ENCODE measurements at regions of chr9 and their contacts with region 1.

Region 1: DNA sequence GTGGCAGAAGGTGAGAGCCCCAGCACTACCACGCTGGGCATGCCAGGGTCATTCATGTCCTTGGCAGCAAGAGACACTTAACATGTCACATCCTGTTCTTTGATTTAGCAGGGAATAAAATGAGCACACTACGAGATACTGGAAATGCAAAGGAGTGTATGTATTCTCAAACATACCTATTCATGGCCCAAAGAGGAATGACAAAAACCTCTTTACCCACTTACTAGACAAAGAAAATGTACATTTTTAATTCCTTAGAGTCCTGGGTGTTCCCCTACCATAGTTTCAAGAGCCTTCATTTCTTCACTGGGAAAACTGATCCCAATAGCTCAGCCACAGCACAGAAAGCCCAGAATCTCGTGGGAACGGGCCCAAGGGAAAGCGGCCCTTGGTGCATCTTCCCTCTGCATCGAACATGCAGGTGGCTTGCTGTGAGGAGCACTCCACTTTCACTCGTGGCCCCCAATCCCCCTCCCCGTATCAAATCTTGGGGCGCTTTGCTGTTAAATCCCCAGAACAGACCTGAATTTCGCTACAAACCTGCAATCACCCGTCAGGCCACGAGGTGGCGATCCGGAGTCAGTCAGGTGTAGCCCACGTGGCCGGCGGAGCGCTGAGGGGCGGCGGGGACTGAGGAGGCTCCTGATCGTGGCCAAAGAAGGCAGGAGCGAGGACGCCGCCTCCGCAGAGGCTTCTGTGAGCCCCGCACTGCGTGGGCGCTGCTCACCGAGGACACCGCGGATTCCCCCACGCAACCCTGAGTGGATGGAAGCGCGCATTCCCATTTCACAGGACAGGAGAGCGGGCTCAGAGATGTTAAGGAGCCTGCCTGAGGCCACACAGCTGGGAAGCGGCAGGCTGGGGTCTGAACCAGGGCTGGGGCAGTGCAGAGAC is 91.4 kb downstream of the LMX1B start:
- DNase-seq: peak; percentile 79
- ATAC-seq: peak; percentile 84
- H3K4me3 Mint-ChIP-seq: peak overlapping the region; percentile 45
- H3K27ac Mint-ChIP-seq: no peak overlapping the region
- H3K4me1 Mint-ChIP-seq: peaks cover 5% of the 10 kb centered on the region
- H3K27me3 Mint-ChIP-seq: peaks cover 32% of the 10 kb centered on the region
- CTCF ChIP-seq: peak; percentile 22

Region 2: GRCh38 chr9:126436545-126437267 is 268.4 kb before region 1 on chr9:
- CTCF ChIA-PET with region 1: no interaction called
- POLR2A ChIA-PET with region 1: no interaction called
- intact Hi-C with region 1: no loop called
- DNase-seq: no peak
- ATAC-seq: no peak
- H3K4me3 Mint-ChIP-seq: no peak overlapping the region
- H3K27ac Mint-ChIP-seq: no peak overlapping the region
- H3K4me1 Mint-ChIP-seq: peaks cover under 1% of the 10 kb centered on the region
- H3K27me3 Mint-ChIP-seq: no peaks in the 10 kb centered on the region
- CTCF ChIP-seq: no peak

Region 3: GRCh38 chr9:126690431-126691350 is 14.4 kb before region 1 on chr9:
- CTCF ChIA-PET with region 1: interaction called, 12 read pairs
- POLR2A ChIA-PET with region 1: no interaction called
- intact Hi-C with region 1: no loop called
- DNase-seq: peak; percentile 48
- ATAC-seq: peak; percentile 69
- H3K4me3 Mint-ChIP-seq: no peak overlapping the region
- H3K27ac Mint-ChIP-seq: no peak overlapping the region
- H3K4me1 Mint-ChIP-seq: no peaks in the 10 kb centered on the region
- H3K27me3 Mint-ChIP-seq: peaks cover 43% of the 10 kb centered on the region
- CTCF ChIP-seq: no peak

Region 4: GRCh38 chr9:126722252-126723078 is 17.3 kb after region 1 on chr9:
- CTCF ChIA-PET with region 1: interaction called, 28 read pairs
- POLR2A ChIA-PET with region 1: interaction called, 37 read pairs
- intact Hi-C with region 1: loop called (anchors 1 kb)
- DNase-seq: peak; percentile 92
- ATAC-seq: peak; percentile 75
- H3K4me3 Mint-ChIP-seq: peak overlapping the region; percentile 90
- H3K27ac Mint-ChIP-seq: peak overlapping the region; percentile 96
- H3K4me1 Mint-ChIP-seq: peaks cover 47% of the 10 kb centered on the region
- H3K27me3 Mint-ChIP-seq: no peaks in the 10 kb centered on the region
- CTCF ChIP-seq: no peak

Region 5: DNA sequence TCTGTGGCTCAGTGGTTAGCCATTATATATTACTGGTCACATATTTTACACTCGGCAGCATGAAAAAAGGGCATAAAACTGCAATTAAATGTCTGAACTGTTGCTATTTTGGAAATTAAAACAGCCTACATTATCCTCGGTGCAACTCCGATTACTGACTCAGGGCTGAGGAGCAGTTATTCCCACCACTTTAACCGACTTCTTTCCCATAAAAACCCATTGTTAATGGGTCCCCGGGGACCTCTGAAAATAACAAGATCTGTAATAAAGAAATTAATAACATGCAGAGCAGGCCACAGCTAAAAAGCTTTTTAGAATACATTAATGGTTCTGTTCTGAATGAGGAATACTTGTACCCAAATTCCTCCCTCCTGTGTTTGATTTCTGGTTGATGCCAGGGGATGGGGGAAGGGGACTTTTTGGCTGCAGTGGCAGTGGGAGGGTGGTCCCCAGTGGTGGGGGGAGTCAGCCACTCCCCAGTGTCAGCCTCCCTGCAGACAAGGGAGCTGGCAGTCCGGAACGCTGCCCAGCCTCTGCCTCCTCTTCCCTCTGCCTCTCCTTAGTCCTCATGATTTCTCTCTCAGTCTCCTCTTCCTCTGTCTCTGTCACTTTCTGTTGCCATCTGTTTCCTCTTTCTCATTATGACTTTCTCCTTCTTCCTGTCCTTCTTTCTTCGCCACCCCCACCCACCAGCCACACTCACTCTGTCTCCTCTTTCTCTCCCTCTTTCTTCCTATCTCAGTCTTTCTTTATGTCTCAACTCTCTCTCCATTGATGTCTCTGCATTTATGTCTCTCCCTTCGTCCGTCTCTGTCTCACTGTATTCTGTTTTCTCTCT is 40.7 kb after region 1 on chr9:
- CTCF ChIA-PET with region 1: interaction called, 16 read pairs
- POLR2A ChIA-PET with region 1: interaction called, 4 read pairs
- intact Hi-C with region 1: loop called (anchors 5 kb)
- DNase-seq: no peak
- ATAC-seq: peak; percentile 52
- H3K4me3 Mint-ChIP-seq: peak overlapping the region; percentile 25
- H3K27ac Mint-ChIP-seq: peak overlapping the region; percentile 73
- H3K4me1 Mint-ChIP-seq: peaks cover 37% of the 10 kb centered on the region
- H3K27me3 Mint-ChIP-seq: peaks cover under 1% of the 10 kb centered on the region
- CTCF ChIP-seq: no peak

Region 6: DNA sequence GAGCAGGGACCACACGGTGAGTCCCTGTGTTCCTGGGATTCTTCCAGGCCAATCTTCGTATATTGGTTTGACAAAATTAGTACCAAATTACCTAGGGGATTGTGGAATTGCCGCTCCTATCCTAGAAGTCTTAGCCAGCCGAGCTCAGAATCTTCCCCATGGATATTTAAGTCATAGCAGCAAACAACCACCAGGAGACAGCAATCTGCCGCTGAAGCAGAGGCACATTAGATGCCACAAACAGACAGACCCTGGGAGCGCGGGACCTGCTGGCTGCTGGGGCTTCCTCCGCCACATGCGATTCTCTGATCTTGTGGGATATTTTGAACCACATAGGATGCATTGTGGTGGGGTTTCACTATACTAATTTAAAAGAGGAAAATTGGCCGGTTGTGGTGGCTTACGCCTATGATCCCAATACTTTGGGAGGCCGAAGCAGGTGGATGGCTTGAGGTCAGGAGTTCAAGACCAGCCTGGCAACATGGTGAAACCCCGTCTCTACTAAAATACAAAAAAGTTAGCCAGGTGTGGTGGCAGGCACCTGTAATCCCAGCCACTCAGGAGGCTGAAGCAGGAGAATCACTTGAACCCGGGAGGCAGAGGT is 68.0 kb after region 1 on chr9:
- CTCF ChIA-PET with region 1: interaction called, 472 read pairs
- POLR2A ChIA-PET with region 1: no interaction called
- intact Hi-C with region 1: no loop called
- DNase-seq: no peak
- ATAC-seq: no peak
- H3K4me3 Mint-ChIP-seq: no peak overlapping the region
- H3K27ac Mint-ChIP-seq: no peak overlapping the region
- H3K4me1 Mint-ChIP-seq: no peaks in the 10 kb centered on the region
- H3K27me3 Mint-ChIP-seq: peaks cover 10% of the 10 kb centered on the region
- CTCF ChIP-seq: no peak

Region 7: DNA sequence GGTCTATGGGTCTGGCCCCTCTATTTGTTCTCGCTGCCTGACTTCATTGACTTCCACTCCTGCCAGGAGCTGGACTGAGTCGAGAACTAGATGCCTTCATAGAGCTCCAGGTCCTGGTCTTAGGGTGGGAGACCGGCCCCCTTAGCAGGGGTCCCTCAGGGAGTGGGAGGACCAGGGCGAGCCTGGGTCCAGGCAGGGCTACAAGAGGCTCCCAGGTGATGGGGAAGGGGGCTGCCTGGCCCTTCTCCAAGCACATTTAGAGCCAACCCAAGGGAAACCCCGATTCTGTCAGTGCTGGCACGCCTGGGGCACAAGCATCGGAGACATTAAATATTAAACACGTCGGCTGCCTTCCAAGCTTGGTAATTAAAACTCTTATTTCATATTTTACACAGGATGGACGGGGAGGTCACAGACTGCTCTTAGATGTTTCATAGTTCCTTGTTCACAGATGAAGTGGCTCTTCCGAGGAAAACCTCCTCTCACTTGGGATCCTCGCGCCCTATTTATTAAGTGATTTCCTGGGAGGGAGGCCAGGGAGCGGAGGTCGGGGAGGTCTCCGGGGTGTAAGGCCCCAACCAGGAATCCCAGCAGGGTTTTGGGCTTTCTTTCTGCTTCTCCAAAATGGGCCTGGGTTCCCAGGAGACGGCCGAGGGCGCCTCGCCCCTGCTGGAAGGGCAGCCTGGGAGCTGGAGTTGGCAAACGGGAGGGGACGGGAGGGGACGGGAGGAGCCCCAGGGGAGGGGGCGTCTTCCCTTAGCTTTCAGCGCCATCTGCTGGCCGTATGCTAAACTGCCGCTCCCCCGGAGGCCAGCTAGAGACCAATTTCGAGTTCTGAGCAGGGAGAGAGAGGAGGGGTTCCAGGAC is 76.3 kb after region 1 on chr9:
- CTCF ChIA-PET with region 1: interaction called, 472 read pairs
- POLR2A ChIA-PET with region 1: interaction called, 19 read pairs
- intact Hi-C with region 1: loop called (anchors 1 kb)
- DNase-seq: peak; percentile 83
- ATAC-seq: peak; percentile 89
- H3K4me3 Mint-ChIP-seq: no peak overlapping the region
- H3K27ac Mint-ChIP-seq: no peak overlapping the region
- H3K4me1 Mint-ChIP-seq: no peaks in the 10 kb centered on the region
- H3K27me3 Mint-ChIP-seq: peaks cover 27% of the 10 kb centered on the region
- CTCF ChIP-seq: peak; percentile 88

Region 8: DNA sequence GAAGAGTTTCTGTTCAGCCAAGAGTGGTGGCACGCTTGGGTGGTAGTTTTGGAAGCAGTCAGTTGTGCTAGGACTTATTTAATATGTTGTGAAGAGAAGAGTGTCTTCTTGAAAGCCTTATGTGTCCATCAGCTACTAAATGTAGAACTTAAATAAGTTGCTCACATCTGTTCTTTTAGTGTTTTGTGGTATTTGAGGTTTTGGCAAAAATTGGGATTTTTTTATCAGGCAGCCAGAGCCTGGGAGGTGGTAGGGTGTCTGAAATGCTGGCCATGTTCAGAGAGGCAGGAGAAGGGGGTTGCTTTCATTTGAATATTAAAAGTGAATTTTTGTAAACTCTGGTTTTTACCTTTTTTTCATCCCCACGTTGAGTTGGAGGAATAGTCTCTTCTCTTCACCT is 131.1 kb after region 1 on chr9:
- CTCF ChIA-PET with region 1: no interaction called
- POLR2A ChIA-PET with region 1: no interaction called
- intact Hi-C with region 1: no loop called
- DNase-seq: no peak
- ATAC-seq: no peak
- H3K4me3 Mint-ChIP-seq: no peak overlapping the region
- H3K27ac Mint-ChIP-seq: no peak overlapping the region
- H3K4me1 Mint-ChIP-seq: peaks cover 42% of the 10 kb centered on the region
- H3K27me3 Mint-ChIP-seq: no peaks in the 10 kb centered on the region
- CTCF ChIP-seq: no peak

Region 9: DNA sequence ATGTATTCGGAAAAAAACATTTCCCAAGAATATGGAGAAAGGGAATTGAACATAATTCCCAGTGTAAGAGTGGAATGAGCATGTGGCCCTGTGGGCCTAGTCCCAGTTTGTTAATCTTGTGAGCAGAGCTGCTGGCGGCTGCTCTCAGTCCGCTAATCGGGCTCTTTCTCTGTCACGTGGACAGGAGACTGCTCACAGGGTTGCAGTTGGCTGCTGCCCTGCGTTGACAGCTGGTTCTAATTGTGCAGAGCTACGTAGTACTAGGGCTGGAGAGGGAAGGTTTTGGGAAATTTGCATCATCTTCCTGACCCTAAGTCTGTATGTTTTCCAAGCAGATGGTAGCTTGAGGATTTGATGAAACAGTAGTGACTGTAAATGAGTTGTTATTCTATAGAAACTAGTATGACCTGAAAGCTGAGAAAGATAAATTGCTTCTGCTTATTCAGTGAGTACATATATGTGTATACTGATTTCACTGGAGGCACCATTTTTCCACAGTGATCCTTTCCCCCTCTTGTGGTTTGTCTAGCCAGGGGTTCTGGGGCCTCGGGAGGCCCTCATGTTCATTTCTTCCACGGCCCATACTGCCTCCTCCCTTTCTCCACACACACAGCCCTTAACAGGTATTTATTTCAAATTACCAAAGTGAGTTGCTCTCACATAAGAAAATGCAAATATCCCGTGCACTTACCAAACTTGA is 316.7 kb after region 1 on chr9:
- CTCF ChIA-PET with region 1: no interaction called
- POLR2A ChIA-PET with region 1: no interaction called
- intact Hi-C with region 1: no loop called
- DNase-seq: no peak
- ATAC-seq: no peak
- H3K4me3 Mint-ChIP-seq: no peak overlapping the region
- H3K27ac Mint-ChIP-seq: no peak overlapping the region
- H3K4me1 Mint-ChIP-seq: peaks cover 2% of the 10 kb centered on the region
- H3K27me3 Mint-ChIP-seq: no peaks in the 10 kb centered on the region
- CTCF ChIP-seq: no peak